ENCODE measurements at regions of chr5 and their contacts with region 1.

Region 1: GRCh38 chr5:38809388-38810359 is 36.1 kb upstream of the OSMR start:
- DNase-seq: peak; percentile 92
- H3K4me3 ChIP-seq: no peak overlapping the region
- H3K27ac ChIP-seq: peak overlapping the region; percentile 55
- H3K27me3 ChIP-seq: no peaks in the 10 kb centered on the region
- CTCF ChIP-seq: peak; percentile 90

Region 2: GRCh38 chr5:38382898-38383297 is 426.8 kb before region 1 on chr5:
- CTCF ChIA-PET with region 1: interaction called, 71 read pairs
- POLR2A ChIA-PET with region 1: no interaction called
- DNase-seq: peak; percentile 46
- H3K4me3 ChIP-seq: no peak overlapping the region
- H3K27ac ChIP-seq: no peak overlapping the region
- H3K27me3 ChIP-seq: peaks cover 25% of the 10 kb centered on the region
- CTCF ChIP-seq: peak; percentile 86

Region 3: GRCh38 chr5:38433160-38433861 is 376.4 kb before region 1 on chr5:
- CTCF ChIA-PET with region 1: interaction called, 16 read pairs
- POLR2A ChIA-PET with region 1: interaction called, 6 read pairs
- DNase-seq: peak; percentile 67
- H3K4me3 ChIP-seq: no peak overlapping the region
- H3K27ac ChIP-seq: peak overlapping the region; percentile 90
- H3K27me3 ChIP-seq: no peaks in the 10 kb centered on the region
- CTCF ChIP-seq: peak; percentile 30; the same call in 1 of the 2 replicates

Region 4: GRCh38 chr5:38497946-38498345 is 311.7 kb before region 1 on chr5:
- CTCF ChIA-PET with region 1: interaction called, 10 read pairs
- POLR2A ChIA-PET with region 1: no interaction called
- DNase-seq: no peak
- H3K4me3 ChIP-seq: no peak overlapping the region
- H3K27ac ChIP-seq: no peak overlapping the region
- H3K27me3 ChIP-seq: no peaks in the 10 kb centered on the region
- CTCF ChIP-seq: 0 out of 2 replicates have a peak, but pooled peaks have one; percentile 8

Region 5: DNA sequence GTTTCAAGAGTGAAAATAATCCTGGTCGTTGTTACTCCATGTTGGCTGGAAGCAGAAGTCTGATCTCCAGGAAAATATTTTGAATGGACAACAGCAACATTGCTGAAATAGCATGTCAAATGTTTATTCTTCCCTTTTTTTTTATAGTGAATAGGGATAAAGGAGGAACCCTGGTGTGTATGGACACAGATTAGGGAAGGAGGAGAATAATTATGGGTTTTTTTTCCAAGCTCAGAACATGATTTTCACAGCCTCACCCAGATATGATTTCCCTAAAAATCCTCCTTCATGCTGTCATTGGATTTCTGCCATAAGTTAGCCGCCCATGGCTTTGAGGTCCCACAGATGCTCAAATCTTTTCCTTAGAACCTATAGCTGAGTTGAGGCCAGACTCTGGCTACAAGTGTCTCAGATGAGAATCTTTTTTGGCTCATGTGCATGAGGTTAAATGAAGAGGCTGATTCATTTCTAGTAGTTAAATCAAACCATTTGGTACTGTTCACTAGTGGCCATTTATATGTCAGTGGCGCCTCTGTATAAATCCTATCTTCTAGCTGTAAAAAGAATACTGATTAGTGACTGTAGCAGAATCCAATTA is 187.7 kb before region 1 on chr5:
- CTCF ChIA-PET with region 1: interaction called, 10 read pairs
- POLR2A ChIA-PET with region 1: no interaction called
- DNase-seq: no peak
- H3K4me3 ChIP-seq: no peak overlapping the region
- H3K27ac ChIP-seq: no peak overlapping the region
- H3K27me3 ChIP-seq: peaks cover 3% of the 10 kb centered on the region
- CTCF ChIP-seq: no peak

Region 6: DNA sequence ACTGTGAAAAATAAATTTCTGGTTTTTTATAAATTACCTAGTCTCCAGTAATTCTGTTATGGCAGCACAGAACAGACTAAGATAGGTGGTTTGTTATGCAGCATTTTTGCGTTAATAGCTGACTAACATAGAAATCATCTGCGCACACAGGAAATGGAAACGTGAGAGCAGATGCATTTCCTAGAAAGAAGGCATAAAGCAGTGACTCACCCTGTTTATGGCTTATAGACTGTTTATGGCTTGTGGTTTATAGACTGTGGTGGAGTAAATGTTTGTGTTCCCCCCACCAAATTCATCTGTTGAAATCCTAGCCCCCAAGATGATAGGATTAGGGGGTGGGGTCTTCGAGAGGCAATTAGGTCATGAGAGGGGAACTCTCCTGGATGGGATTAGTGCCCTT is 17.9 kb after region 1 on chr5:
- CTCF ChIA-PET with region 1: interaction called, 13 read pairs
- POLR2A ChIA-PET with region 1: no interaction called
- DNase-seq: no peak
- H3K4me3 ChIP-seq: no peak overlapping the region
- H3K27ac ChIP-seq: no peak overlapping the region
- H3K27me3 ChIP-seq: no peaks in the 10 kb centered on the region
- CTCF ChIP-seq: no peak

Measured in AG04450 (cell line).